ENCODE measurements at regions of chr2 and their contacts with region 1.

Region 1: DNA sequence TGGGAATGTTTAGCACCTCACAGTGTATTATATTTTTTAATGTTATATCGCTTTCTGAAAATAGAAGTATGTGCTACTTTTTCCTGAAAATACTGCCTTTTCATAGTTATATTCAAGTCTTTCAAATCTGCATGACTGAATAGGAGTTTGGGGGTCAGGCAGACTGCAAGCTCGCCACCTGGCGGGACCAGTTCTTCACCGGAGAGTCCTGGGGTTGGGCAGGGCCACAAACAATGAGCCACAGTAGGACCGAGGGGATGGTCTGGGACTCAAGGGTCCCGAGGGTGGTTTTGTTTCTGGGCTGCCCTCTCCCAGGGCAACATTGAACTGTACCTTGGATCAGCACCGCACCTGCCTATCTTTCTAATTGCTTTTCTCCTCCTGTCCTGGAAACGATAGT is 70.6 kb downstream of the VWA3B start:
- DNase-seq: no peak
- H3K4me3 ChIP-seq: no peak overlapping the region
- H3K27ac ChIP-seq: no peak overlapping the region
- H3K4me1 ChIP-seq: no peaks in the 10 kb centered on the region
- H3K27me3 ChIP-seq: peaks cover 1 to 2% of the 10 kb centered on the region in 2 experiments
- CTCF ChIP-seq: no peak
- POLR2A ChIP-seq: no peak

Region 2: GRCh38 chr2:98346311-98347236 is 189.0 kb after region 1 on chr2 and contains the start of gene CNGA3:
- CTCF ChIA-PET with region 1: no interaction called
- POLR2A ChIA-PET with region 1: no interaction called
- dilution Hi-C with region 1: loop called (anchors 25 kb)
- intact Hi-C with region 1: no loop called
- DNase-seq: peak; percentile 11
- H3K4me3 ChIP-seq: no peak within 1 kb of the TSS
- H3K27ac ChIP-seq: no peak within 1 kb of the TSS
- H3K4me1 ChIP-seq: no peaks in the 10 kb centered on the region
- H3K27me3 ChIP-seq: peaks cover 43 to 67% of the 10 kb centered on the region in 2 experiments
- CTCF ChIP-seq: no peak
- POLR2A ChIP-seq: no peak
- total RNA-seq, gene CNGA3: not detected in 2 replicates

Measured in endothelial cell of umbilical vein (primary cell).